ENCODE measurements at regions of chr11 and their contacts with region 1.

Region 1: DNA sequence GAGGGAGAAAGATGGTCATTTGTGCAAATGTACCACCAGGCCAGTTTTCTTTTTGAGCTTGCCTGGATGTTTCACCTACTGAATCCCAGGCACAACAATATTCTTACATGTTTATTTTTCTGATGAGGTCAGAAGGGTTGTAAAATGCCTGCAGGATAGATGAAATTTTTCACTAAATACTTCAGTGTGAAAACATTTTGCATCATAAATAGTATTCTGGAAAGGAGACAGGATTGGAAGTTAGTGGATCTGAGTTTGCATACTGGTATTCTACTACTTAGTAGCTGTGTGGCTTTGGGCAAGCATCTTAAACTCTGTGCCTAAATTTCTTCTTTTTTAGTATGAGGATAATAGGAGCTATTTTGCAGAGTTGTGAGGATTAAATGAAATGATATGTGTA is 24.8 kb downstream of the RNF169 start:
- DNase-seq: no peak
- H3K4me3 ChIP-seq: no peak overlapping the region
- H3K4me3 Mint-ChIP-seq: no peak overlapping the region
- H3K27ac Mint-ChIP-seq: no peak overlapping the region
- H3K4me1 ChIP-seq: no peaks in the 10 kb centered on the region
- H3K4me1 Mint-ChIP-seq: peaks cover 14% of the 10 kb centered on the region
- H3K27me3 ChIP-seq: no peaks in the 10 kb centered on the region
- H3K27me3 Mint-ChIP-seq: no peaks in the 10 kb centered on the region
- CTCF ChIP-seq: no peak

Region 2: GRCh38 chr11:74791333-74792100 is 18.0 kb after region 1 on chr11:
- CTCF ChIA-PET with region 1: no interaction called
- POLR2A ChIA-PET with region 1: interaction called, 12 read pairs
- intact Hi-C with region 1: no loop called
- DNase-seq: no peak
- H3K4me3 ChIP-seq: no peak overlapping the region
- H3K4me3 Mint-ChIP-seq: no peak overlapping the region
- H3K27ac Mint-ChIP-seq: no peak overlapping the region
- H3K4me1 ChIP-seq: no peaks in the 10 kb centered on the region
- H3K4me1 Mint-ChIP-seq: no peaks in the 10 kb centered on the region
- H3K27me3 ChIP-seq: no peaks in the 10 kb centered on the region
- H3K27me3 Mint-ChIP-seq: no peaks in the 10 kb centered on the region
- CTCF ChIP-seq: no peak

Region 3: GRCh38 chr11:74842967-74843366 is 69.5 kb after region 1 on chr11:
- CTCF ChIA-PET with region 1: no interaction called
- POLR2A ChIA-PET with region 1: no interaction called
- intact Hi-C with region 1: no loop called
- DNase-seq: no peak
- H3K4me3 ChIP-seq: no peak overlapping the region
- H3K4me3 Mint-ChIP-seq: no peak overlapping the region
- H3K27ac Mint-ChIP-seq: no peak overlapping the region
- H3K4me1 ChIP-seq: peaks cover 3% of the 10 kb centered on the region; the same call in 1 of the 2 replicates
- H3K4me1 Mint-ChIP-seq: peaks cover 4% of the 10 kb centered on the region
- H3K27me3 ChIP-seq: no peaks in the 10 kb centered on the region
- H3K27me3 Mint-ChIP-seq: no peaks in the 10 kb centered on the region
- CTCF ChIP-seq: no peak

Region 4: GRCh38 chr11:75069473-75069872 is 296.0 kb after region 1 on chr11:
- CTCF ChIA-PET with region 1: no interaction called
- POLR2A ChIA-PET with region 1: interaction called, 10 read pairs
- intact Hi-C with region 1: no loop called
- DNase-seq: no peak
- H3K4me3 ChIP-seq: no peak overlapping the region
- H3K4me3 Mint-ChIP-seq: no peak overlapping the region
- H3K27ac Mint-ChIP-seq: no peak overlapping the region
- H3K4me1 ChIP-seq: no peaks in the 10 kb centered on the region
- H3K4me1 Mint-ChIP-seq: no peaks in the 10 kb centered on the region
- H3K27me3 ChIP-seq: peaks cover 1% of the 10 kb centered on the region; the same call in 1 of the 2 replicates
- H3K27me3 Mint-ChIP-seq: peaks cover 17% of the 10 kb centered on the region
- CTCF ChIP-seq: no peak